GM23248 (cell line): ENCODE measurements at regions of chr15 and their contacts with region 1.

Region 1: GRCh38 chr15:23912191-23912590 is 225.1 kb upstream of the NDN start:
- DNase-seq: no peak
- H3K4me3 ChIP-seq: no peak overlapping the region
- H3K27ac ChIP-seq: no peak overlapping the region
- H3K4me1 ChIP-seq: no peaks in the 10 kb centered on the region
- H3K27me3 ChIP-seq: no peaks in the 10 kb centered on the region

Region 2: GRCh38 chr15:22827125-22827524 is 1085.1 kb before region 1 on chr15:
- in situ Hi-C with region 1: no loop called
- DNase-seq: no peak
- H3K4me3 ChIP-seq: no peak overlapping the region
- H3K27ac ChIP-seq: no peak overlapping the region
- H3K4me1 ChIP-seq: no peaks in the 10 kb centered on the region
- H3K27me3 ChIP-seq: no peaks in the 10 kb centered on the region

Region 3: GRCh38 chr15:23839893-23840474 is 72.2 kb before region 1 on chr15:
- in situ Hi-C with region 1: loop called (anchors 10 kb)
- DNase-seq: no peak
- H3K4me3 ChIP-seq: no peak overlapping the region
- H3K27ac ChIP-seq: no peak overlapping the region
- H3K4me1 ChIP-seq: no peaks in the 10 kb centered on the region
- H3K27me3 ChIP-seq: no peaks in the 10 kb centered on the region